Head of caudate nucleus (tissue), 42 donors: ENCODE measurements at regions of chr15 and their contacts with region 1.

Region 1: GRCh38 chr15:73127301-73127936 is 75.2 kb downstream of the NEO1 start:
- DNase-seq: peak in 19 of 42 donors; percentile 8 to 63 (median 25)

Region 2: GRCh38 chr15:73239564-73240215 is 112.3 kb after region 1 on chr15:
- intact Hi-C with region 1: loop called (anchors 10 kb)
- DNase-seq: peak in 3 of 42 donors; percentile 3 to 30 (median 16)

Region 3: GRCh38 chr15:73258271-73259108 is 131.1 kb after region 1 on chr15:
- intact Hi-C with region 1: no loop called
- DNase-seq: no peak